ENCODE measurements at regions of chr4 and their contacts with region 1.

Region 1: GRCh38 chr4:145481164-145481941 is at the start of gene SMAD1:
- DNase-seq: peak; percentile 76
- H3K4me3 ChIP-seq: peak within 1 kb of the TSS; percentile 88
- H3K27ac ChIP-seq: peak within 1 kb of the TSS; percentile 82
- H3K4me1 ChIP-seq: peaks cover 43% of the 10 kb centered on the region
- CTCF ChIP-seq: no peak
- total RNA-seq, gene SMAD1: 56.4 and 60.9 TPM in 2 replicates

Region 2: GRCh38 chr4:145180298-145181090 is 300.9 kb before region 1 on chr4 and contains the start of gene OTUD4:
- CTCF ChIA-PET with region 1: no interaction called
- POLR2A ChIA-PET with region 1: no interaction called
- intact Hi-C with region 1: loop called (anchors 5 kb)
- DNase-seq: peak; percentile 97
- H3K4me3 ChIP-seq: peak within 1 kb of the TSS; percentile 97
- H3K27ac ChIP-seq: peak within 1 kb of the TSS; percentile 82
- H3K4me1 ChIP-seq: peaks cover 34% of the 10 kb centered on the region
- CTCF ChIP-seq: peak; percentile 59
- total RNA-seq, gene OTUD4: 17.3 and 23.4 TPM in 2 replicates

Region 3: DNA sequence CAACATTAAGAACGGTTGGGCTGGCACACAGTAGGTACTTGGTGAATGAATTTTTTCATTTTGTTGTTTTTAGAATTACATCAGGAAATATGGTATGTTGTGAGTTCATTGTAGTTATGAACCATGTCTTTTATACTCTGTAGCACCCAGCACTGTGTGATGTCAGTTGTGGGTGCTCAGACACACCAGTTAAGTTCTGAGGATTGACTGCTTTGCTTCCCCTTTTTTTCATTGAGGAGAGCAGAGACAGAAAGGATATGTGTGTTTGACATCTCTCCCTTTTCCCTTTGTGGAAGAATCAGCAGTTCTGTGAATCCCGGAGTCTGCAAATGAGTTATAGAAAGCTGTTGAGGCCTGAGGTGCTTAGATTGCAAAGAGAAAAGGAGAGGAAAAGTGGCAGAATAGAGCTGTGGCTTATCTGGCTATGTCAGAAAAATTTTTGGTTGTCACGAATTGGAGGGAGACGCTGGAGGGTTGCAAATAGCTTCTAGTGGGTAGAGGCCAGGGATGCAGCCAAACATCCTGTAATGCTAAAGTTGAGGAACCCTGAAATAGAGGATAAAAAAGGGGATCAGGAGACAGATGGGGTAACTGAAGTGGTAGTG is 13.4 kb after region 1 on chr4:
- CTCF ChIA-PET with region 1: interaction called, 3 read pairs
- POLR2A ChIA-PET with region 1: interaction called, 48 read pairs
- intact Hi-C with region 1: no loop called
- DNase-seq: peak; percentile 55
- H3K4me3 ChIP-seq: peak overlapping the region; percentile 27
- H3K27ac ChIP-seq: peak overlapping the region; percentile 60
- H3K4me1 ChIP-seq: peaks cover 100% of the 10 kb centered on the region
- CTCF ChIP-seq: no peak

Region 4: DNA sequence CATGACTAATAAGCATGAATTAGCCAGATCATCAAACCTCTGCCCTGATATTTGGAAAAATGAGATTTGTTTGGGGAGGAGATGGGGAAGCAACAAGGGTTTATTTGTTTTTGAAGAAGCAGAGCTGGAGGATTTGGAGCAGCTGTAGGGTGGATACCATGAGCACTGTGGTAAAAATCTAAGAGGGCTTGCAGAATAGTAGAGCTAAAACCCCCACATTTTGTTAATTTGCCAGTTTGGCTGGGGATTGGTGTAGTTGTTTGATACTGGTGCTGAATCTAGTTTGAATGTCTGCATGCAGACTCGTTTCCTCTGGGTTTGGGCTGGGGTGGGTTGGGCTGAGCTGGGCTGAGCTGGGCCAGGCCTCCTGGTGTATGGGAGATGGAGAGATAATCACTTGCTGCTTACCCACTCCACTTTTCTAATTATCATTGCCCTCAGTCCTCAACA is 44.0 kb after region 1 on chr4:
- CTCF ChIA-PET with region 1: no interaction called
- POLR2A ChIA-PET with region 1: interaction called, 30 read pairs
- intact Hi-C with region 1: loop called (anchors 1 kb)
- DNase-seq: peak; percentile 33
- H3K4me3 ChIP-seq: peak overlapping the region; percentile 56
- H3K27ac ChIP-seq: peak overlapping the region; percentile 95
- H3K4me1 ChIP-seq: peaks cover 89% of the 10 kb centered on the region
- CTCF ChIP-seq: no peak

Region 5: GRCh38 chr4:145557720-145558119 is 76.4 kb after region 1 on chr4:
- CTCF ChIA-PET with region 1: interaction called, 3 read pairs
- POLR2A ChIA-PET with region 1: interaction called, 11 read pairs
- intact Hi-C with region 1: loop called (anchors 2 kb)
- DNase-seq: peak; percentile 79
- H3K4me3 ChIP-seq: no peak overlapping the region
- H3K27ac ChIP-seq: no peak overlapping the region
- H3K4me1 ChIP-seq: peaks cover 21% of the 10 kb centered on the region
- CTCF ChIP-seq: peak; percentile 99

Region 6: GRCh38 chr4:145618932-145619638 is 137.7 kb after region 1 on chr4 and contains the start of gene MMAA:
- CTCF ChIA-PET with region 1: no interaction called
- POLR2A ChIA-PET with region 1: interaction called, 10 read pairs
- intact Hi-C with region 1: loop called (anchors 2 kb)
- DNase-seq: peak; percentile 95
- H3K4me3 ChIP-seq: peak within 1 kb of the TSS; percentile 97
- H3K27ac ChIP-seq: peak within 1 kb of the TSS; percentile 92
- H3K4me1 ChIP-seq: peaks cover 24% of the 10 kb centered on the region
- CTCF ChIP-seq: peak; percentile 81
- total RNA-seq, gene MMAA: 1.6 and 2.5 TPM in 2 replicates

Region 7: GRCh38 chr4:145887241-145887991 is 406.1 kb after region 1 on chr4:
- CTCF ChIA-PET with region 1: no interaction called
- POLR2A ChIA-PET with region 1: no interaction called
- intact Hi-C with region 1: no loop called
- DNase-seq: peak; percentile 26
- H3K4me3 ChIP-seq: no peak overlapping the region
- H3K27ac ChIP-seq: no peak overlapping the region
- H3K4me1 ChIP-seq: peaks cover 28% of the 10 kb centered on the region
- CTCF ChIP-seq: no peak

Region 8: DNA sequence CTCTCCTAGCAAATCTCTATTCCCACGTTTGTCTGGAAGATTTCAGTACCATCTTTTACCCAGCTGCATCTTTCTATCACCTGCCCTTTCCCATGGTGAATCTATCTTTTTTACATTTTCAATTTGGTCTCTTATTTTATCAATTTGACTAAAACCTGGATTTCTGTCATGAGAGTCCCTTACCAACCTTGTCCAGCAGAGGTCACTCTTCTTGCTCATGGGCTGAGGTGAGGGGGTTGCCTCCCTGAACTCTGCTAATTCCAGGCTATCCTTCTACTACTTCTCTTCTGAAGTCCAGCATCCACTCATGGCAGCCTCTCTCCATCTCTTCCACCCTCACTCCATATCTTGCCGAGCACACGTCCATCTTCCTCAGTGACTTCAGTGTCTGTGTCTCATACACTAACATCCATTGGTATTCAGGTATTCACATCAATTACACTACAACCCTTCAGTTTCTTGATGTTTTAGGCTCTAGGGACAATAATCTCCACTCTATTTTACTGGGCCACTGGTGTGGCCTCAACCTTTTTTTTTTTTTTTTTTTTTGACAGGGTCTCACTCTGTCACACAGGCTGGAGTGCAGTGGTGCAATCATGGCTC is 475.0 kb after region 1 on chr4:
- CTCF ChIA-PET with region 1: no interaction called
- POLR2A ChIA-PET with region 1: no interaction called
- intact Hi-C with region 1: no loop called
- DNase-seq: peak; percentile 73
- H3K4me3 ChIP-seq: no peak overlapping the region
- H3K27ac ChIP-seq: no peak overlapping the region
- H3K4me1 ChIP-seq: peaks cover 3% of the 10 kb centered on the region
- CTCF ChIP-seq: peak; percentile 99

Measured in OCI-LY7 (cell line).